Activated CD4-positive, alpha-beta memory T cell treated with anti-CD3 and anti-CD28 coated beads for 36 hours (primary cell): ENCODE measurements at regions of chr17 and their contacts with region 1.

Region 1: DNA sequence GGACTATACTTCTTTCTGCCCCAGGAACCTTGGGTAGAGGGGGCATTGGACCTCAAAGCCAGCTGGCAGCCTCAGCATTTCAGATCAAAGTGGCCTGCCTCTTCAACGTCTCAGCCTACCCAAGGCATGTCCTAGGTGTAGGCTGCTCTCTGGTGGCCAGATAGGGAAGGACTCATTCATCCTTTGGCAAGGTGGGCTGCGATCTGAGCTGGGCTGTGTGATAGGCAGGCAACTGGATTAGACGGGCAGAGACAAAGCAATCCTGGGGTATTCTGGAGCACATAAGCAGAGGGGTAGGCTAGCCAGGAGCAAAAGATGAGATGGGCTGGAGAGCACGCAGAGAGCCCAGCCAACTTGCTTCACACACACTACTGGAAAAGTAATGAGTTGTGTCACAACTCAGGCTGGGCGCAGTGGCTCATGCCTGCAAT is 8.8 kb upstream of the NAGLU start:
- DNase-seq: peak; percentile 81
- H3K4me3 Mint-ChIP-seq: no peak overlapping the region
- H3K27ac Mint-ChIP-seq: no peak overlapping the region
- H3K4me1 Mint-ChIP-seq: peaks cover 37% of the 10 kb centered on the region
- H3K27me3 Mint-ChIP-seq: peaks cover 9% of the 10 kb centered on the region

Region 2: DNA sequence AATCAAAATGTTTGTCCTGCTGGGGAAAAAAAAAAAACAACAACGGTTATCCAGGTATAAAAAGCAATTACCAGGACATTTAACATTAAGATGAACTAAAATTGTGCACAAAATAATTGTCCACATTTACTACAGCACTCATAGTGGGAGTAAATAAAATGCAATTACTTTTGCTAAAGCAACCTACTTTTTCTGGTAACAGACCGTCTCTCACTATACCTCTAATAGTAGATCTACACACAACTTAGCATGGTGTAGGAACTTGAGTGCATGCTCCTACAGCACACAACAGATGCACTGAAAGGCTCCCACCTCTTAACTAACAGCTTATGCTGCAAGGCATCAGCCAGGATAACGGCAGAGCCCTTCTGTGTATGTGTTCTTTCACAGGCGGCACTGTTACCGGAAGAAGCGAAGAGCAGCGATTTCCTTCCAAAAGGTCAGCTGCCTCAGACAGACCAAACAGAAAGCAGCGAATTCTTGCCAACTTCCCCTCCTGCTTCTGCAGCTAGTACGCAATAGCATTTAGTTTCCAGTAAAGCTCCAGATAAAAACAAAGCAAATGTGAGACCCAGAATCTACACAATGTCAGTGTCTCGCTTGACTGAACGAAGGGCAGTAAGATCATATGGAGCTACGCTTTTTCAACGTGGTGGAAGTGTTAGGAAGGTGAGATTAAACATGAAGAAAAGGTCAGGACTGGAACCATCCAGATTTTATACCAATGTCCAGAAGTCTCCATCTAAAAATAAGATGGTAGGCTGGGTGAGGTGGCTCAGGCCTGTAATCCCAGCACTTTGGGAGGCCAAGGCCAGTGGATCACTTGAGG is 278.7 kb before region 1 on chr17:
- CTCF ChIA-PET with region 1: no interaction called
- POLR2A ChIA-PET with region 1: no interaction called
- intact Hi-C with region 1: no loop called
- DNase-seq: peak; percentile 88
- H3K4me3 Mint-ChIP-seq: peak overlapping the region; percentile 73
- H3K27ac Mint-ChIP-seq: peak overlapping the region; percentile 95
- H3K4me1 Mint-ChIP-seq: peaks cover 68% of the 10 kb centered on the region
- H3K27me3 Mint-ChIP-seq: no peaks in the 10 kb centered on the region

Region 3: DNA sequence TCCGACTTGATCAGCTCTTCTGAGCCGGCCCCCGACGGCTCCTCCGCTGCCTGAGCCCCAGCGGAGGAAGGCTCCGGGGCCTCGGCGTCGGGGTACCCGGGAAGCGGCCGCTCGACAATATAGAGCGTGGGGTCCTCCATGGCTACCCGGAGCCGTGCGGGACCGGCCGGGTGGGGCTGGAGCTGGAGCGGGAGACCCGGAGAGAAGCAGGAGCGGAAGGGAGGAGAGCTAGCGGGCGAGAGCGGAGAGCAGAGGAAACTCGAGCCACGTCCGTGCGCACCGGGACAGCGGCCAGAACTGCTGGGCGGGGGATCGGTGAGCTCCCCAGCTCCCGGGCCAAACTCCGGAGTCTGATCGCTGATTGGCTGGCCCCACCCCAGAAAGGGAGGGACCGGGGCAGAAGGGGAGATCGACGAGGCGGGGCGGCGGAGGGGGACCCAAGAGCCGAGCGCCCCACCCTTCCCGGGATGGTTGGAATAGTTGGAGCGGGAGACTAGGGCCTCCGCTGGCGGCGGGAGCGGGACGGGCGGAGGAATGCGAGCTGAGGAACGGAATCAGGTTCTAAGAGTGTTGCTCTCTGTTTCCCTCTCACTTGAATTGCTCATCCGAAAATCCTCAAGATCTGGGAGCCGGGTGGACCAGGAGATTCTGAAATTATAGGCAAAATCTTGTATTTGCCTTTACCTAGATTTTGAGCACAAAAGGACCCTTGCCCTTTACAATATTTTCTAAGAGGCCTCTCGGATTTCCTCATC is 104.2 kb before region 1 on chr17 and contains the start of gene CAVIN1:
- CTCF ChIA-PET with region 1: interaction called, 17 read pairs
- POLR2A ChIA-PET with region 1: no interaction called
- intact Hi-C with region 1: no loop called
- DNase-seq: peak; percentile 34
- H3K4me3 Mint-ChIP-seq: peak within 1 kb of the TSS; percentile 68
- H3K27ac Mint-ChIP-seq: no peak within 1 kb of the TSS
- H3K4me1 Mint-ChIP-seq: peaks cover 17% of the 10 kb centered on the region
- H3K27me3 Mint-ChIP-seq: peaks cover 24% of the 10 kb centered on the region
- total RNA-seq, gene CAVIN1: 2.5 to 2.9 TPM

Region 4: GRCh38 chr17:42438600-42439567 is 88.4 kb before region 1 on chr17:
- CTCF ChIA-PET with region 1: interaction called, 19 read pairs
- POLR2A ChIA-PET with region 1: no interaction called
- intact Hi-C with region 1: no loop called
- DNase-seq: peak; percentile 57
- H3K4me3 Mint-ChIP-seq: no peak overlapping the region
- H3K27ac Mint-ChIP-seq: no peak overlapping the region
- H3K4me1 Mint-ChIP-seq: peaks cover 3% of the 10 kb centered on the region
- H3K27me3 Mint-ChIP-seq: peaks cover 2% of the 10 kb centered on the region

Region 5: DNA sequence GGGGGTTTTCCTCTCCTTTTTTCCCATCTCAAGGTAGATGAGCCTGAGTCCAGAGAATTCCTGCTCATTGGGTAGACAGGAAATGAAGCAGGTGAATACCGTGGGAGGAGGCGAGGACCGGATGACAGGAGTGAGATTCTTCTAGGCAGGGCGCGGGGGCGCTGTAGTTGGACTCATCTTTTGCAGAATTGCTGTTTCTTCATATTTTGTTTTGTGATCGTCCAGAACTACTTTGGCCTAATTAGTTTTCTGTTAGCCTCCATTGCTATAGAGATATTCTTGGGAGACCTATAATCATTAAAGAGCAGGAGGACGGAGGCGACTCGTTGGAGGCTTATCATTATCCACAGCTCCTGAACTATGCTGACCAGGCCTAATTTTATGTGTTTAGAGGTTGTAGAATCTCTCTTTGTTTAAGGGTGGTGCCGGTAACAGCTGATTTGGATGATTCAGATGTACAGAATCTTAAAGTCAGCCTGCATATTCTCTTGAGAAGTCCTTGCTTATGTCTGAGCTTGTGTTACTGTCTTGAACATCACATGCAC is 68.0 kb before region 1 on chr17:
- CTCF ChIA-PET with region 1: interaction called, 11 read pairs
- POLR2A ChIA-PET with region 1: no interaction called
- intact Hi-C with region 1: no loop called
- DNase-seq: peak; percentile 59
- H3K4me3 Mint-ChIP-seq: peak overlapping the region; percentile 92
- H3K27ac Mint-ChIP-seq: no peak overlapping the region
- H3K4me1 Mint-ChIP-seq: peaks cover 41% of the 10 kb centered on the region
- H3K27me3 Mint-ChIP-seq: no peaks in the 10 kb centered on the region

Region 6: GRCh38 chr17:42484304-42484703 is 43.0 kb before region 1 on chr17:
- CTCF ChIA-PET with region 1: interaction called, 3 read pairs
- POLR2A ChIA-PET with region 1: no interaction called
- intact Hi-C with region 1: loop called (anchors 1 kb)
- DNase-seq: peak; percentile 88
- H3K4me3 Mint-ChIP-seq: no peak overlapping the region
- H3K27ac Mint-ChIP-seq: peak overlapping the region; percentile 28
- H3K4me1 Mint-ChIP-seq: peaks cover 23% of the 10 kb centered on the region
- H3K27me3 Mint-ChIP-seq: peaks cover 2% of the 10 kb centered on the region

Region 7: GRCh38 chr17:42629411-42630009 is 102.2 kb after region 1 on chr17:
- CTCF ChIA-PET with region 1: no interaction called
- POLR2A ChIA-PET with region 1: no interaction called
- intact Hi-C with region 1: no loop called
- DNase-seq: no peak
- H3K4me3 Mint-ChIP-seq: no peak overlapping the region
- H3K27ac Mint-ChIP-seq: no peak overlapping the region
- H3K4me1 Mint-ChIP-seq: no peaks in the 10 kb centered on the region
- H3K27me3 Mint-ChIP-seq: no peaks in the 10 kb centered on the region